Activated T-helper 1 cell treated with anti-CD3 and anti-CD28 coated beads, Interleukin-12 subunit alpha, Interleukin-12 subunit beta, Interleukin-2, Interleukin-4 antibody, amounts not matched to agents 30 ng/mL and 10 ng/mL and 1 ng/mL, durations not matched to agents 14 hours and 24 hours and 36 hours (primary cell): ENCODE measurements at regions of chr16 and their contacts with region 1.

Region 1: GRCh38 chr16:50210266-50211038 is 55.9 kb upstream of the ADCY7 start:
- DNase-seq: peak; percentile 52
- H3K4me3 Mint-ChIP-seq: no peak overlapping the region
- H3K27ac Mint-ChIP-seq: peak overlapping the region; percentile 71
- H3K4me1 Mint-ChIP-seq: peaks cover 29% of the 10 kb centered on the region
- H3K27me3 Mint-ChIP-seq: no peaks in the 10 kb centered on the region

Region 2: GRCh38 chr16:50024684-50025536 is 185.5 kb before region 1 on chr16 and contains the start of gene CNEP1R1:
- intact Hi-C with region 1: loop called (anchors 1 kb)
- DNase-seq: peak; percentile 92
- H3K4me3 Mint-ChIP-seq: peak within 1 kb of the TSS; percentile 96
- H3K27ac Mint-ChIP-seq: peak within 1 kb of the TSS; percentile 84
- H3K4me1 Mint-ChIP-seq: peaks cover 26% of the 10 kb centered on the region
- H3K27me3 Mint-ChIP-seq: peaks cover 11% of the 10 kb centered on the region
- total RNA-seq, gene CNEP1R1: 21.9 and 22.7 TPM in 2 replicates

Region 3: DNA sequence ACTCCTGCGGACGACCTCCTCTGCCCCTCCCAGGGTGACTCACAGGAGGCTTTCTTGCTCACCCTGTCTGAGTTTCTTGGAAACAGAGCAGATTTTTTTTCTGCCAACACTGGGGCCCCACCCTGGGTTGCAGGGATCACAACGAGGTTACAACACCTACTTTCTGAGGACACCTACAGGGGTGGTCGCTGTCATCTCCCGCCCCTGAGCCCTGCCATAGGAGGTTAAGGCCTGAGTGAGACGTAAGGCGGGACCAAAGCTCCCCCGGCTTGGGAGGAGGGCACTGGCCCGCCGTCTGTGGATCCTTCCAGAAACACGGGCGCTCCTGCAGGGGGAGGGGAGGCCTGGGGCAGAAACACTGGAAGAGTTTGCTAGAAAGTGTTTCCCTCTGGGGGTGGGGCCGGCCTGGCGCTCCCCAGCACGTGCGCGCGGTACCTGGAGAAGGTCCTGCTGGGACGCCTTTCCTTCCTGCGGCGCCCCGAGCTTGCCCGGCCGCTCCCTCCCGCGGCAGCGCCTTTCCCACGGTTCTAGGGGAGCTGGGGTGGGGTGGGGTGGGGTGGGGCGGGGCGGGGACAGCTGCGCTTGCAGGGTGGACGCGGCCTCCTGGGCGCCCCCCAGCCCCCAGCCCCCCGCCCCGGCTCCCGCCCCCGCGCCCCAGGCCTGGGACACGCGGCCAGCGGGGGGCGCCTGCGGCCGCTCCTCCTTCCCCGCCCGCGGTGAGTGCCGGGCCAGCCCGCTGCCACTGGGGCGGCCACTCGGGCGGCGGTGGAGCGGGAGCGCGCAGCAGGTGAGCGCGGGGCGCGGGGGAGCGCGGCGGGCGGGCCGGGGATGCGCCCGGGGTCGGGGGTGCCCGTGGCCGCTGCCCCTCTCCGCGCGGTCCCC is 35.2 kb after region 1 on chr16:
- intact Hi-C with region 1: loop called (anchors 1 kb)
- DNase-seq: peak; percentile 34
- H3K4me3 Mint-ChIP-seq: peak overlapping the region; percentile 83
- H3K27ac Mint-ChIP-seq: peak overlapping the region; percentile 71
- H3K4me1 Mint-ChIP-seq: peaks cover 16% of the 10 kb centered on the region
- H3K27me3 Mint-ChIP-seq: peaks cover 6% of the 10 kb centered on the region

Region 4: DNA sequence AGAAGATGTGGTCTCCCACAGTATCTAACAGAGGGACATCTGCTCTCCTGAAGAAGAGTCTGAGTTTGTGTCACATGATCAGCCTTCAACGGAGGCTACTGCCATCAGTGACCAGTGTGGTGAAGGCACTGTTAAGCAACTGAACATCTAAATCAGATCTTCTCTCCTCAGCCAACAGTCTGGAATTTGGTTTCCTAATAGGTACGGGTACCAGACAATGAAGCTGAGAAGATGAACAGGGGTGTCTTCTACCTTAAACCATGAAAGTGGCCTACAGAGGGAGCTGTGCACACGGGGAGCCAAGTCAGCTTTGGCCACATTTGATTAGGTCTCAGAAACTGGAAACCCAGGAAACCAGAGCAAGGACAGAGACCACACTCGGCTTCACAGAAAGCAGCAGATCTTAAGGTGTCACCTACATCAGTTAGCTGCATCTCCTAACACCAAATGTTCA is 116.5 kb after region 1 on chr16:
- intact Hi-C with region 1: loop called (anchors 2 kb)
- DNase-seq: peak; percentile 68
- H3K4me3 Mint-ChIP-seq: no peak overlapping the region
- H3K27ac Mint-ChIP-seq: no peak overlapping the region
- H3K4me1 Mint-ChIP-seq: peaks cover 45% of the 10 kb centered on the region
- H3K27me3 Mint-ChIP-seq: no peaks in the 10 kb centered on the region

Region 5: GRCh38 chr16:50548125-50548908 is 337.9 kb after region 1 on chr16 and contains the start of gene NKD1:
- intact Hi-C with region 1: loop called (anchors 5 kb)
- DNase-seq: peak; percentile 65
- H3K4me3 Mint-ChIP-seq: peak within 1 kb of the TSS; percentile 91
- H3K27ac Mint-ChIP-seq: peak within 1 kb of the TSS; percentile 59
- H3K4me1 Mint-ChIP-seq: peaks cover 14% of the 10 kb centered on the region
- H3K27me3 Mint-ChIP-seq: peaks cover 37% of the 10 kb centered on the region
- total RNA-seq, gene NKD1: 1.1 and 1.4 TPM in 2 replicates

Region 6: GRCh38 chr16:50747207-50747956 is 536.9 kb after region 1 on chr16:
- intact Hi-C with region 1: loop called (anchors 2 kb)
- DNase-seq: peak; percentile 40
- H3K4me3 Mint-ChIP-seq: peak overlapping the region; percentile 85
- H3K27ac Mint-ChIP-seq: peak overlapping the region; percentile 92
- H3K4me1 Mint-ChIP-seq: peaks cover 74% of the 10 kb centered on the region
- H3K27me3 Mint-ChIP-seq: no peaks in the 10 kb centered on the region